ENCODE measurements at regions of chr22 and their contacts with region 1.

Region 1: DNA sequence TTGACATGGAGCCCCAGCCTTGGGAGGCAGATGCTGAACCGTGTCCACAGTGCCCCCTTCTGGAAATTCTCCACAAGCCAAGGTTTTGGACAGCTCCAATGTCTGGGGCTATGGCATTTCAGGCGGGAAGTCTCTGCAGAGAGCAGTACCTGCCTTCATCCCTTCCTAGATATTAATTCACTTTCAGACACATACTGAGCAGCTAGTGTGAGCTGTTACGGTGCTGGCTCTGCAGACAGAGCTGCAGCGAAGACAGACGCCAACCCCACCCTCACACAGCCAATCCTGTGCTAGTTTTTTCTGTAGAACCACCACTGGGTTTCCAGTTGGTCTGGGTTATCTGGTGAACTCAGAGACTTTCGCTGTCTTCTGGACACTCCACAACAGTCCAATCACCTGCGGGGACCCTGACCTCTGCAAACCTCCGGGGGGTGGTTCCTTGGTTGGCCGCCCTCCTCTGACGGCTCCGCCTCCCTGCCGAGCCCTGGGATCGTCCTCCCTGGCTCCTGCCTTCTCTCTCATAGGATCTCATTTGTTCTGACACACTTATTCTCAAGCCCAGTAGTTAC is 9.1 kb downstream of the LMF2 start:
- DNase-seq: peak; percentile 67 to 72
- H3K4me3 ChIP-seq: peak overlapping the region; percentile 22; the same call in 1 of the 2 replicates
- H3K27ac ChIP-seq: no peak overlapping the region
- H3K4me1 ChIP-seq: peaks cover 12% of the 10 kb centered on the region
- H3K27me3 ChIP-seq: no peaks in the 10 kb centered on the region
- CTCF ChIP-seq: peak; percentile 88

Region 2: DNA sequence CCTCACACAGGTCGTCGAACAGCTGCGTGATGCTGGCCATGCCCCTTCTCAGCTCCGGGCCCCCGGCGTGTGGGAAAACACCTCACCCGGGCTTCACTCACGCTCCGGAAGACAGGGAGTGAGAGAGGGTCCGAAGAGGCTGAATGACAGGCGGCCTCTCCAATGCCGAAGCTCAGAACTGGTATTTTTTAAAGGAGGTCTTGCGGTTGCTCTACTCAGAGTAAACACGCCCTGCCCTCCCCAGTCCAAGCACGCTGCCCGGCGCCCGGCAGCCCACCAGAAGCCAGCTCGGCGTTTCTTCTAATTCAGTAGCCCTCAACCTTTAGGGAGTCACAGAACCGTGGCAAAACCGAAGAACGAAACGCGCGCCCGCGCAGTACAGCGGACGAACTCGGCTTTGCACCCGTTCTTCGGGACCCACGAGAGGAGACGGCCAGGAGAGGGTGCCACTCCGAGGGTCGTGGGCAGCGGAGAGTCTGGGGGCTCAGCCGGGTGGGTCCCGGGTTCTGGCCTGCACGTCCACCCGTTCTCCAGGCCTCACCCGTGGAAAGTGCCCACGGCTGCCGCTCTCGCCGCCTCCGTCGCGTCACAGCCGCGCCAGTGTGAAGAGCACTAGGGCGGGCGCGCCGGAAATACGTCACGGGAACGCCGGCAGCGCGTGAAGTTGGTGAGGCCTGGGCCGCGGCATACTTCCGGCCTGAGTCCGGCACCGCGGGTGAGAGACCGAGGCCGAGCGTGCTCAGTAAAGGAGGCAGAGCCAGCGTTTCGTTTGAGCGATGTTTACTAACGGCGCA is 253.8 kb before region 1 on chr22 and contains the start of gene TUBGCP6:
- CTCF ChIA-PET with region 1: no interaction called
- POLR2A ChIA-PET with region 1: interaction called, 4 read pairs
- intact Hi-C with region 1: loop called (anchors 2 kb)
- DNase-seq: peak; percentile 91 to 93
- H3K4me3 ChIP-seq: peak within 1 kb of the TSS; percentile 86
- H3K27ac ChIP-seq: peak within 1 kb of the TSS; percentile 69
- H3K4me1 ChIP-seq: peaks cover 37% of the 10 kb centered on the region
- H3K27me3 ChIP-seq: no peaks in the 10 kb centered on the region
- CTCF ChIP-seq: peak; percentile 27; the same call in 1 of the 2 replicates
- total RNA-seq, gene TUBGCP6: 31.3 and 34.8 TPM in 2 replicates

Region 3: DNA sequence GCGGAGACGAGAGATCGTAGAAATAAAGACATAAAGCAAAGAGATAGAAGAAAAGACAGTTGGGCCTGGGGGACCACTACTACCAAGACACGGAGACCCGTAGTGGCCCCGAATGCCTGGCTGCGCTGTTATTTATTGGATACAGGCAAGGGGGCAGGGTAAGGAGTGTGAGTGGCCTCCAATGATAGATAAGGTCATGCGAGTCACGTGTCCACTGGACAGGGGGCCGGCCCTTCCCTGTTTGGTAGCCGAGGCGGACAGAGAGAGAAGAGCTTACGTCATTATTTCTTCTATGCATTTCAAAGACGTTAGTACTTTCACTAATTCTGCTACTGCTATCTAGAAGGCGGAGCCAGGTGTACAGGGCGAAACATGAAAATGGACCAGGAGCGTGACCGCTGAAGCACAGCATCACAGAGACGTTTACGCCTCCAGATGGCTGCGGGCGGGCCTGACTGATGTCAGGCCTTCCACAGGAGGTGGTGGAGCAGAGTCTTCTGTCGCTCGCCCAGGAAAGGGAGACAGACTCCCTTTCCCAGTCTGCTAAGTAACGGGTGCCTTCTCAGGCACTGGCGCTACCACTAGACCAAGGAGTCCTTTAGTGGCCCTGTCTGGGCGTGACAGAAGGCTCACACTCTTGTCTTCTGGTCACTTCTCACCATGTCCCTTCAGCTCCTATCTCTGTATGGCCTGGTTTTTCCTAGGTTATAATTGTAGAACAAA is 130.5 kb before region 1 on chr22:
- CTCF ChIA-PET with region 1: no interaction called
- POLR2A ChIA-PET with region 1: no interaction called
- intact Hi-C with region 1: no loop called
- DNase-seq: no peak
- H3K4me3 ChIP-seq: no peak overlapping the region
- H3K27ac ChIP-seq: no peak overlapping the region
- H3K4me1 ChIP-seq: no peaks in the 10 kb centered on the region
- H3K27me3 ChIP-seq: no peaks in the 10 kb centered on the region
- CTCF ChIP-seq: no peak

Region 4: GRCh38 chr22:50456466-50457234 is 41.8 kb before region 1 on chr22:
- CTCF ChIA-PET with region 1: no interaction called
- POLR2A ChIA-PET with region 1: no interaction called
- intact Hi-C with region 1: loop called (anchors 5 kb)
- DNase-seq: no peak
- H3K4me3 ChIP-seq: no peak overlapping the region
- H3K27ac ChIP-seq: no peak overlapping the region
- H3K4me1 ChIP-seq: no peaks in the 10 kb centered on the region
- H3K27me3 ChIP-seq: no peaks in the 10 kb centered on the region
- CTCF ChIP-seq: peak; percentile 54; the same call in 1 of the 2 replicates

Region 5: GRCh38 chr22:50544078-50544745 is 45.8 kb after region 1 on chr22:
- CTCF ChIA-PET with region 1: interaction called, 18 read pairs
- POLR2A ChIA-PET with region 1: no interaction called
- intact Hi-C with region 1: no loop called
- DNase-seq: peak; percentile 74 to 82
- H3K4me3 ChIP-seq: peak overlapping the region; percentile 30; the same call in 1 of the 2 replicates
- H3K27ac ChIP-seq: peak overlapping the region; percentile 75
- H3K4me1 ChIP-seq: peaks cover 67% of the 10 kb centered on the region
- H3K27me3 ChIP-seq: no peaks in the 10 kb centered on the region
- CTCF ChIP-seq: peak; percentile 72

Measured in PC-9 (cell line).